Left lung (tissue), 14 donors: ENCODE measurements at regions of chr9 and their contacts with region 1.

Region 1: GRCh38 chr9:6584881-6585597 is 60.5 kb downstream of the GLDC start:
- DNase-seq: peak in 2 of 4 donors; percentile 26 to 38
- ATAC-seq: peak; percentile 40
- H3K4me3 ChIP-seq: no peak overlapping the region
- H3K27ac ChIP-seq: no peak overlapping the region
- H3K4me1 ChIP-seq: no peaks in the 10 kb centered on the region
- H3K27me3 ChIP-seq: no peaks in the 10 kb centered on the region
- CTCF ChIP-seq: peak; percentile 25 to 54

Region 2: DNA sequence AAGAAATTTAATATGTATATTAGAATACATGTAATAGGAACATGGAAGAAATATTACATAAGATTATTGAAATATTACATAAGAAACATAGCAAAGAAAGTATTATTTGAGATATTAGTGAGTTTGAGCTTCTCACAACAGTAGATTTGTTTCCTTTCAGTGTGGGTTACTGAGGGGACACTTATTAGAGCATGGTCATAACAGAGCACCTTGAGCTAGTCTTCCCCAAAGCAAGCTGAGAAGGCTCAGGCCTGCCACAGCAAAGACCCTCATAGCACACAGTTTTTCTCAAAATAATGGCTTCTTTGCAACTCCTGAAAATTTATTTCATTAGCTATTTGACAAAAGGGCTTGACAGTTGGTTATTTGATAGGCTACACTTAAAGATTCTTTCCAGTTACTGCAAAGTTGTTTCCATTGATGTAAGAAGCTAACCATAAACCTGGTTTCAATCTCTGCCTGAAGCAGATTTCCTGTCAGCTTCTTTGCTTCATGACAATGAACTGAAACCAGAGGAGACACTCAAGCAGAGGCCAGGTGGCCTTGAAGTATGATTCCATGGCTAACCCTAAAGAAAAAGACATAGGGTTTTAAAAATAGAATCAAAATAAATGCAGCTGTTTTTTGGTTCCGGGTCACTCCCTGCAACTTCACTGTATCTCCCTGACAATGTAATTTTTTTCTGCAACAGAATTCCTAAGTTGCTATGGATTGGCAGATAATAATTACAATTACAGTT is 820.7 kb before region 1 on chr9:
- intact Hi-C with region 1: no loop called
- DNase-seq: no peak
- ATAC-seq: no peak
- H3K4me3 ChIP-seq: no peak overlapping the region
- H3K27ac ChIP-seq: no peak overlapping the region
- H3K4me1 ChIP-seq: no peaks in the 10 kb centered on the region
- H3K27me3 ChIP-seq: no peaks in the 10 kb centered on the region
- CTCF ChIP-seq: no peak

Region 3: DNA sequence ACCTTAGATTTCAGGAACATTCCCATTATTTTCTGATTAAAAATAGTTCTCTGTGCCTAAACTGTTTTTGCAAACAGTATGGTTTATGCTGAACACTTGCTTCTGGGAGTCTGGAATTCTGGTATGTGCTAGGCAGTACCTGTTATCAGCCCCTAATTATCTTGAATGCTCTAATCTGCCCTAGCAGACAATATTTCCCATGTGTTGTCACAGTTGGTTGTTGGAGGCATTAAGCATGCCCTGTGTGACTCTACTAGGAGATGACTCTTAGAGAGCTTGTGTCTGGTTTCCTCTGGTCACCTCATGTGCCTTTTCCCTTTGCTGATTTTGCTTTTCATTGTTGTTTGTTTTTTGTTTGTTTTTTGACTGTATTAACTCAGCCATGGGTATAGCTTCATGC is 135.4 kb before region 1 on chr9:
- intact Hi-C with region 1: no loop called
- DNase-seq: no peak
- ATAC-seq: no peak
- H3K4me3 ChIP-seq: no peak overlapping the region
- H3K27ac ChIP-seq: no peak overlapping the region
- H3K4me1 ChIP-seq: peaks cover 0 to 29% of the 10 kb centered on the region in 2 donors
- H3K27me3 ChIP-seq: no peaks in the 10 kb centered on the region
- CTCF ChIP-seq: no peak

Region 4: GRCh38 chr9:6667633-6668280 is 82.7 kb after region 1 on chr9:
- intact Hi-C with region 1: loop called in 1 of 2 experiments (anchors 10 kb)
- DNase-seq: peak in 1 of 4 donors; percentile 33
- ATAC-seq: peak; percentile 35
- H3K4me3 ChIP-seq: no peak overlapping the region
- H3K27ac ChIP-seq: no peak overlapping the region
- H3K4me1 ChIP-seq: no peaks in the 10 kb centered on the region
- H3K27me3 ChIP-seq: no peaks in the 10 kb centered on the region
- CTCF ChIP-seq: peak; percentile 20 to 40